Activated T-helper 1 cell treated with anti-CD3 and anti-CD28 coated beads, Interleukin-12 subunit alpha, Interleukin-12 subunit beta, Interleukin-2, Interleukin-4 antibody, amounts not matched to agents 30 ng/mL and 10 ng/mL and 1 ng/mL, durations not matched to agents 14 hours and 24 hours and 36 hours (primary cell): ENCODE measurements at regions of chr11 and their contacts with region 1.

Region 1: GRCh38 chr11:35082321-35083182 is 56.4 kb upstream of the CD44 start:
- DNase-seq: peak; percentile 85
- H3K4me3 Mint-ChIP-seq: peak overlapping the region; percentile 56
- H3K27ac Mint-ChIP-seq: peak overlapping the region; percentile 91
- H3K4me1 Mint-ChIP-seq: peaks cover 82% of the 10 kb centered on the region
- H3K27me3 Mint-ChIP-seq: no peaks in the 10 kb centered on the region

Region 2: GRCh38 chr11:35066783-35067423 is 15.6 kb before region 1 on chr11:
- intact Hi-C with region 1: loop called (anchors 1 kb)
- DNase-seq: peak; percentile 25
- H3K4me3 Mint-ChIP-seq: peak overlapping the region; percentile 8
- H3K27ac Mint-ChIP-seq: peak overlapping the region; percentile 66
- H3K4me1 Mint-ChIP-seq: peaks cover 31% of the 10 kb centered on the region
- H3K27me3 Mint-ChIP-seq: no peaks in the 10 kb centered on the region

Region 3: GRCh38 chr11:35165423-35166368 is 83.1 kb after region 1 on chr11:
- intact Hi-C with region 1: loop called (anchors 1 kb)
- DNase-seq: peak; percentile 92
- H3K4me3 Mint-ChIP-seq: peak overlapping the region; percentile 63
- H3K27ac Mint-ChIP-seq: peak overlapping the region; percentile 97
- H3K4me1 Mint-ChIP-seq: peaks cover 100% of the 10 kb centered on the region
- H3K27me3 Mint-ChIP-seq: no peaks in the 10 kb centered on the region

Region 4: GRCh38 chr11:35237860-35238715 is 155.5 kb after region 1 on chr11:
- intact Hi-C with region 1: loop called (anchors 5 kb)
- DNase-seq: peak; percentile 48
- H3K4me3 Mint-ChIP-seq: peak overlapping the region; percentile 42
- H3K27ac Mint-ChIP-seq: peak overlapping the region; percentile 36
- H3K4me1 Mint-ChIP-seq: peaks cover 67% of the 10 kb centered on the region
- H3K27me3 Mint-ChIP-seq: no peaks in the 10 kb centered on the region